Ovary (tissue), 10 donors: ENCODE measurements at regions of chr10 and their contacts with region 1.

Region 1: GRCh38 chr10:88473989-88474883 is 108.9 kb downstream of the RNLS start:
- DNase-seq: peak in 2 of 5 donors; percentile 25 to 35
- H3K4me3 ChIP-seq: no peak overlapping the region
- H3K27ac ChIP-seq: peak overlapping the region; percentile 13 to 21
- H3K4me1 ChIP-seq: peaks cover 7% of the 10 kb centered on the region
- H3K27me3 ChIP-seq: no peaks in the 10 kb centered on the region
- CTCF ChIP-seq: no peak
- EP300 ChIP-seq: no peak
- POLR2A ChIP-seq: no peak

Region 2: DNA sequence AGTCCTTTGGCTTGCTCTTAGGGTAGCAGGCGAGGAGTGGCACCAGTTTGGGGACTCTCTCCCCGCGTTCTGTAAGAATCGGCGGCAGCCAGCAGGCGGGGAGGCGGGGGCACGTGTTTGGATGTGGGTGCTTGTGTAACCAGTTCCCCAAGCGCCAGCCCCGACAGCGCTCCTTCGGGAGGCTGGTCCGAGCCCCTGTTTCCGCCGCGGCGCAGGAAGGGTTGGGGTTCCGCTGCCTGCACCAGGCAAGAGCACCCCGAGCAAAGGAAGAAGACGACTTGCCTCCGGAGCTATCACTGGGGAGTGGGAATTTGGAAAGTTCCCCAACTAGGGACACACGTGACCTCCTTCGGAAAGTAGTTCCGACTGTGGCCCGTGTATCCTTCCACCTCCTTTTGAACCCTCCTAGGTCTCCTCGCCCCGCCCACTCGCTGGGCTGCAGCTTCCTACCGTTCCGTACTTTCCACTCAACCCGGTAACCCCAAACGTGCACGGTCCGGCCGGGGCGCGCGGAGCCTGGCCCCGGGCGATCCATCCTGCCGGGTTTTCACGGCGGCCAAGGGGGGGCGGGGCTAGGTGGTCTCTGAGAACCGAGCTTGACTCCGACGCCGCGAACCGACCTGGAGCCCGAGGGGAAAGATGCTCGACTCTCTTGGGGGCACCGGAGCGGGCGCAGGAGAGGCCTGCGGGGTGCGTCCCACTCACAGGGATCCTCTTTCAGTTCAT is 612.1 kb before region 1 on chr10:
- intact Hi-C with region 1: loop called in 1 of 4 experiments (anchors 5 kb)
- DNase-seq: peak; percentile 96 to 97 (median 97)
- H3K4me3 ChIP-seq: peak overlapping the region; percentile 54
- H3K27ac ChIP-seq: peak overlapping the region; percentile 93 to 97
- H3K4me1 ChIP-seq: peaks cover 2% of the 10 kb centered on the region
- H3K27me3 ChIP-seq: no peaks in the 10 kb centered on the region
- CTCF ChIP-seq: no peak
- EP300 ChIP-seq: no peak
- POLR2A ChIP-seq: peak; percentile 46

Region 3: GRCh38 chr10:88297103-88297502 is 177.1 kb before region 1 on chr10:
- intact Hi-C with region 1: no loop called
- DNase-seq: no peak
- H3K4me3 ChIP-seq: no peak overlapping the region
- H3K27ac ChIP-seq: no peak overlapping the region
- H3K4me1 ChIP-seq: no peaks in the 10 kb centered on the region
- H3K27me3 ChIP-seq: no peaks in the 10 kb centered on the region
- CTCF ChIP-seq: no peak
- EP300 ChIP-seq: no peak
- POLR2A ChIP-seq: no peak

Region 4: DNA sequence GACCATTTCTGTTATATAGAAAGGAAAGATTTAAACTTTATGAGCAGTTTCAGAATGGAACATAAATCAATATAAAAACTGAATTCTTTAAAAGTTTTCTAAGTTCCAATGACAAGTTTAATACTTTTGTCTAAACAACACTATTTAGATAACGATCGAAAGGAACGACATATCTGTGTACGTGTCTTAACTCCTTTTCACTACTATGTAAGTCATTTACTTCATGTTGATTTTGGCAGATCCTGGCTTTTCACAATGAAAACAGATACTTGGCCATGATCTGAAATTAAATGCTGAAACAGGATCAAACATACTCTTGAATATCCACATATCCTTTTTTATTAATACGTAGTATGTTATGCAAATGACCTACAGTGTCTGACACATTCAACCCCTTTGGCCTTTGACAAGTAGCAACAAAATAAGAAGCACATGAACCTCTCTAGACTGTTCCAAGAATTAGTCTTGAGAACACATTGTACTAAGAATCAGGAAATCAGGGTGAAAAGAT is 66.9 kb after region 1 on chr10:
- intact Hi-C with region 1: loop called in 1 of 4 experiments (anchors 10 kb)
- DNase-seq: no peak
- H3K4me3 ChIP-seq: no peak overlapping the region
- H3K27ac ChIP-seq: peak overlapping the region in 1 of 2 donors; percentile 31
- H3K4me1 ChIP-seq: peaks cover 2% of the 10 kb centered on the region
- H3K27me3 ChIP-seq: no peaks in the 10 kb centered on the region
- CTCF ChIP-seq: no peak
- EP300 ChIP-seq: peak; percentile 20
- POLR2A ChIP-seq: no peak